PC-9 (cell line): ENCODE measurements at regions of chr7 and their contacts with region 1.

Region 1: GRCh38 chr7:88243345-88243909 is 23.6 kb upstream of the SRI start:
- DNase-seq: peak; percentile 63 to 82
- H3K4me3 ChIP-seq: no peak overlapping the region
- H3K27ac ChIP-seq: no peak overlapping the region
- H3K4me1 ChIP-seq: peaks cover 9% of the 10 kb centered on the region; the same call in 1 of the 2 replicates
- H3K27me3 ChIP-seq: no peaks in the 10 kb centered on the region
- CTCF ChIP-seq: peak; percentile 91

Region 2: GRCh38 chr7:88219781-88220747 is 23.4 kb before region 1 on chr7 and contains the start of gene SRI:
- CTCF ChIA-PET with region 1: interaction called, 25 read pairs
- POLR2A ChIA-PET with region 1: interaction called, 9 read pairs
- intact Hi-C with region 1: no loop called
- DNase-seq: peak; percentile 79 to 93
- H3K4me3 ChIP-seq: peak within 1 kb of the TSS; percentile 77
- H3K27ac ChIP-seq: peak within 1 kb of the TSS; percentile 97
- H3K4me1 ChIP-seq: peaks cover 46% of the 10 kb centered on the region
- H3K27me3 ChIP-seq: no peaks in the 10 kb centered on the region
- CTCF ChIP-seq: peak; percentile 88
- total RNA-seq, gene SRI: 235 and 269 TPM in 2 replicates

Region 3: GRCh38 chr7:88291398-88292173 is 48.2 kb after region 1 on chr7:
- CTCF ChIA-PET with region 1: interaction called, 11 read pairs
- POLR2A ChIA-PET with region 1: interaction called, 9 read pairs
- intact Hi-C with region 1: loop called (anchors 1 kb)
- DNase-seq: peak; percentile 85 to 97
- H3K4me3 ChIP-seq: no peak overlapping the region; the same call in 1 of the 2 replicates
- H3K27ac ChIP-seq: peak overlapping the region; percentile 97
- H3K4me1 ChIP-seq: peaks cover 58% of the 10 kb centered on the region
- H3K27me3 ChIP-seq: no peaks in the 10 kb centered on the region
- CTCF ChIP-seq: no peak

Region 4: GRCh38 chr7:88401007-88401623 is 157.7 kb after region 1 on chr7:
- CTCF ChIA-PET with region 1: interaction called, 3 read pairs
- POLR2A ChIA-PET with region 1: no interaction called
- intact Hi-C with region 1: loop called (anchors 2 kb)
- DNase-seq: no peak
- H3K4me3 ChIP-seq: no peak overlapping the region
- H3K27ac ChIP-seq: no peak overlapping the region
- H3K4me1 ChIP-seq: no peaks in the 10 kb centered on the region
- H3K27me3 ChIP-seq: no peaks in the 10 kb centered on the region
- CTCF ChIP-seq: peak; percentile 76

Region 5: DNA sequence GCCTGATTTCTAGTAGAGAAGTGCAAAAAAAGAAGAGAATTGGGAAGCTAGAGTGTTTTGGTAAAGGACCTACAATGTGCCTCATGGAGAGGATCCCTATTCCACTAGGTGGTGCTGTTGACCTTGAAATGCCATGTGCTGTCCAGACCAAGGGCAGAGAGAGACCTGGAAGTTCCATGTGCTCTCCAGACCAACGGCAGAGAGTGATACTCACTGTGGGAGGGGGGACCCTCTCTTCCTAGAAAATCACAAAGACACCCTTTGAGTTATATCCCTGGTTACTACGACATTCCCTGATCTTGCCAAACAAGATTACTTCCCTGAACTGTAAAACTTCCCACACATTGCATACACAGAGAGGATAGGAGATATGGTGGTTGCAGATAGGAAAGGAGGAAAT is 303.4 kb after region 1 on chr7:
- CTCF ChIA-PET with region 1: interaction called, 4 read pairs
- POLR2A ChIA-PET with region 1: no interaction called
- intact Hi-C with region 1: loop called (anchors 1 kb)
- DNase-seq: peak in 1 of 2 experiments; percentile 37
- H3K4me3 ChIP-seq: no peak overlapping the region
- H3K27ac ChIP-seq: no peak overlapping the region
- H3K4me1 ChIP-seq: no peaks in the 10 kb centered on the region
- H3K27me3 ChIP-seq: no peaks in the 10 kb centered on the region
- CTCF ChIP-seq: peak; percentile 86

Region 6: DNA sequence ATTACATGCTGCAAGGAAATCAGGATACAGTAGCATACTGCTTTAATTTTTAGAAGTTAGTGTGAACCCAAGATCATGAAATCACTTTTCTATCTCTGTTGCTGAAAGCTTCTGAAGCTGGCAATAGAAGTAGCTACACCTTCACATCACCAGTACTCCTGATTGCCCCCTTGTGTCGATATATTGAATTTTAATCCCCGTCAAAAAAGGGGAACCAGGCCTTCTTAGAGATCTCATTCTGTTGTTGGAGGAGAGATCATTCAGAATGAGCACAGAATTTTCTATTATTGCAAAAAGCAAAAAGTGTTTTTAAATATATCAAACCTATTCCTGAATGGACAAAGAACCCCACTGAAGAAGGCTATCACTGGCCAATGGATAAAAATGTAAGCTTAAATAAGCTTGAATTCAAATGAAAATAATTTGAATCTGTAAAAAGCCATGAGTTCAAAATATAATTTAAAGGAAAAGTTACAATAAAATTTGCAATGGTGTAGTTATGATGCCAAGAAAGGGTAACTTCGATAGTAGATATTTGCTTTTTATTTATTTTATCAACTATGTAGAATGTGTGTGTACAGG is 591.8 kb after region 1 on chr7:
- CTCF ChIA-PET with region 1: interaction called, 14 read pairs
- POLR2A ChIA-PET with region 1: no interaction called
- intact Hi-C with region 1: loop called (anchors 1 kb)
- DNase-seq: peak in 1 of 2 experiments; percentile 5
- H3K4me3 ChIP-seq: no peak overlapping the region
- H3K27ac ChIP-seq: no peak overlapping the region
- H3K4me1 ChIP-seq: no peaks in the 10 kb centered on the region
- H3K27me3 ChIP-seq: no peaks in the 10 kb centered on the region
- CTCF ChIP-seq: peak; percentile 65

Region 7: GRCh38 chr7:90119178-90119971 is 1875.9 kb after region 1 on chr7:
- CTCF ChIA-PET with region 1: no interaction called
- POLR2A ChIA-PET with region 1: no interaction called
- intact Hi-C with region 1: loop called (anchors 10 kb)
- DNase-seq: peak in 1 of 2 experiments; percentile 1
- H3K4me3 ChIP-seq: no peak overlapping the region
- H3K27ac ChIP-seq: no peak overlapping the region
- H3K4me1 ChIP-seq: no peaks in the 10 kb centered on the region
- H3K27me3 ChIP-seq: no peaks in the 10 kb centered on the region
- CTCF ChIP-seq: no peak